H1 (cell line): ENCODE measurements at regions of chr5 and their contacts with region 1.

Region 1: DNA sequence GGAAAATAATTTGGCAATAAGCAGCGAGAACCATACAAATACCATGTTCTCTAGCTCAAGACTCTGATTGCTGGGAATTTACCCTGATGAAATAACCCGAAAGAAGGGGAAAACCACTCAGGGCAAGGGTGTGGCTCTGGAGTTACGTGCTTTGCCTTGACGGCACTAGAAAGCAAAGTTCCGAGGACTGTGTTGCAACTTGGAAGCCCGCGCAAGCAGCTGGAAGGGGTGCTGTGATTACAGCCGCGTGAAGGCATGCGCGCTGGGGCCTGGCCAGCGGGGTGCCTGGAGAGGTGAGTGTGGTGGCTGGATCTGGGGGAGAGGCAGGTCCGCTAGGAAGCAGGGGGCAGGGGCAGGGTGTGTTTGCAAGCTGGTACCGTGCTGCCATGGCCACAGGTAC is 52.6 kb upstream of the CNOT6 start:
- DNase-seq: no peak
- H3K4me3 ChIP-seq: no peak overlapping the region
- H3K27ac ChIP-seq: no peak overlapping the region
- H3K4me1 ChIP-seq: peaks cover 0 to 2% (median 0%) of the 10 kb centered on the region in 4 experiments; a peak in 1 of 7 replicates
- H3K27me3 ChIP-seq: 0 out of 7 replicates have a peak, but pooled peaks cover 0 to 2% (median 0%) of the 10 kb centered on the region in 4 experiments
- CTCF ChIP-seq: no peak
- EP300 ChIP-seq: no peak
- POLR2A ChIP-seq: no peak
- RAD21 ChIP-seq: no peak

Region 2: GRCh38 chr5:180454752-180455151 is 13.2 kb after region 1 on chr5:
- CTCF ChIA-PET with region 1: interaction called, 13 read pairs
- POLR2A ChIA-PET with region 1: interaction called, 3 read pairs
- DNase-seq: no peak
- H3K4me3 ChIP-seq: no peak overlapping the region
- H3K27ac ChIP-seq: no peak overlapping the region
- H3K4me1 ChIP-seq: no peaks in the 10 kb centered on the region
- H3K27me3 ChIP-seq: no peaks in the 10 kb centered on the region
- CTCF ChIP-seq: no peak
- EP300 ChIP-seq: no peak
- POLR2A ChIP-seq: no peak
- RAD21 ChIP-seq: no peak

Region 3: GRCh38 chr5:180575571-180575970 is 134.0 kb after region 1 on chr5:
- CTCF ChIA-PET with region 1: no interaction called
- POLR2A ChIA-PET with region 1: no interaction called
- DNase-seq: no peak
- H3K4me3 ChIP-seq: no peak overlapping the region
- H3K27ac ChIP-seq: no peak overlapping the region
- H3K4me1 ChIP-seq: no peaks in the 10 kb centered on the region
- H3K27me3 ChIP-seq: no peaks in the 10 kb centered on the region
- CTCF ChIP-seq: no peak
- EP300 ChIP-seq: no peak
- POLR2A ChIP-seq: no peak
- RAD21 ChIP-seq: no peak